ENCODE measurements at regions of chr2 and their contacts with region 1.

Region 1: DNA sequence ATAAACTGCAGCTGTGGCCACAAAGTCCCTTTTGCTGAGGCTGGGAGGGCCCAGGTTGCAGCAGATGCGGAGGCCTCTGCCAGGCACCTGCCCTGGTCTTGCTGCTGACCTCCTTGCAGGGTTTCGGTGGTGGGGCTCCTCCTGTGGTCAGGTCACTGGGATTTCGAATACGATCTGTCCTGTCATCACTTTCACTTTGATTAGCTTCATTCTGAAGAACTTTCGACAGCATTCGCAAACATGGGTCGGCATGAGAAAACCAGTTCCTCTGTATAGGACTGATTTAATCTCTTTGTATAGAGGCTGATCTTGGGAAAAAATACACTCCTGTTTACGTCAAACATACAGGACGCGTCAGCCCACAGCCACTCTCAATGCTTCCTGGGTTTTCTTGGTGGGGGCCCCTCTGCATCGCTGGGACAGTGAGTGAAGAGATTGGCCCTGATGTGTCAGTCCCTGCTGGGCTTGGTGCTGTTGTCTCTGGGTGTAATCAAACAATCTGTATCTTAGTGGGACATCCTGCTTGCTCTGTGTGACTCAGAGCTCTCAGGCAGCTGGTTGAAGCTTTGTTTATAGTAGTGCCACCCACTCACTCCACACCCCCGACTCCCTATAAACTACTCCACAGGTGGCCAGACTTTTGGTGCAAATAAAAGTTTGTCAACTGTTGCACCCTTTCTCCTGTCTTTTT is 209.4 kb upstream of the CXCR4 start:
- DNase-seq: peak; percentile 89
- H3K4me3 Mint-ChIP-seq: peak overlapping the region; percentile 52
- H3K27ac Mint-ChIP-seq: peak overlapping the region; percentile 82
- H3K4me1 Mint-ChIP-seq: peaks cover 62% of the 10 kb centered on the region
- H3K27me3 Mint-ChIP-seq: no peaks in the 10 kb centered on the region

Region 2: DNA sequence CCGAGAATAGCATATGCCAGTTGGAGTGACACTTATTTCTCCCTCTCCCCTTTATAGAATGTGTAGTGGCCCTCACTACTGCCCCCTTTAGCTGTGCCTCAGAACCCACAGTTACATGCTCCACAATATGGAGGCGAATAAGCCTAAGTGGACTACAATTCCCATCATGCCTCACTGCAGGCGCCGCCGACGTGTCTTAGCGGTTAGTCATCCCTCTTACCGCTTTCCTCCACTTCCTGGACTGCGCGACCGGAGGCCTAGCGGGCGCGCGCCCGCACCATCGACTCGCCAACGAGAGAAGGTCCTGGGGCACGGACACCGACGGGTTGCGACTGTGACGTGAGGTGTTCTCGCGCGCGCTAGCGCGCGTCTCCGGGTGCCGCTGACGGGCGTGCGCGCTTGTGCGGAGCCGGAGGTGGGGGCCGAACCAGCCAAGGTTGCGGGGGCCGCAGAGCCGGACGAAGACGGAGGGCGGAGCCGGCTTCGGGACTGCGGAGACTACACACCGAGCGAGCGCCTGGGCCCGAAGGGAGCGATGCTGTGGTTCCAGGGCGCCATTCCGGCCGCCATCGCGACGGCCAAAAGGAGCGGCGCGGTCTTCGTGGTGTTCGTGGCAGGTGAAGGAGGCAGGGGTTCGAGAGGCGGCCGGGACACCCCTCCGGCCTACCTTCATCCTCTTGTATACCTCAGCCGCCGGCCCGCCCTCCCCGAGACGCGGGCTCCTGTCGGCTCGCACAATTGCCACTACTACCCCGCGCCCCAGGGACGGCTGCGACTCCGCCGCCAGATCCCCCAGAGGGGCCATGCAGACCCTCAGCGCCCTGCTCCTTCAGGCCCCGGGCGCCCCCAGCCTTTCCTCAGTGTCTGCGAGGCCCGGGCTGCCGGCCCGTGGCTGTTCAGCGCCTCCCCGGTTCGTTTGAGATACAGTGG is 585.6 kb before region 1 on chr2 and contains the start of gene UBXN4:
- CTCF ChIA-PET with region 1: no interaction called
- intact Hi-C with region 1: loop called (anchors 5 kb)
- DNase-seq: peak; percentile 98
- H3K4me3 Mint-ChIP-seq: peak within 1 kb of the TSS; percentile 98
- H3K27ac Mint-ChIP-seq: peak within 1 kb of the TSS; percentile 99
- H3K4me1 Mint-ChIP-seq: peaks cover 30% of the 10 kb centered on the region
- H3K27me3 Mint-ChIP-seq: no peaks in the 10 kb centered on the region
- total RNA-seq, gene UBXN4: 100 to 105 TPM

Region 3: DNA sequence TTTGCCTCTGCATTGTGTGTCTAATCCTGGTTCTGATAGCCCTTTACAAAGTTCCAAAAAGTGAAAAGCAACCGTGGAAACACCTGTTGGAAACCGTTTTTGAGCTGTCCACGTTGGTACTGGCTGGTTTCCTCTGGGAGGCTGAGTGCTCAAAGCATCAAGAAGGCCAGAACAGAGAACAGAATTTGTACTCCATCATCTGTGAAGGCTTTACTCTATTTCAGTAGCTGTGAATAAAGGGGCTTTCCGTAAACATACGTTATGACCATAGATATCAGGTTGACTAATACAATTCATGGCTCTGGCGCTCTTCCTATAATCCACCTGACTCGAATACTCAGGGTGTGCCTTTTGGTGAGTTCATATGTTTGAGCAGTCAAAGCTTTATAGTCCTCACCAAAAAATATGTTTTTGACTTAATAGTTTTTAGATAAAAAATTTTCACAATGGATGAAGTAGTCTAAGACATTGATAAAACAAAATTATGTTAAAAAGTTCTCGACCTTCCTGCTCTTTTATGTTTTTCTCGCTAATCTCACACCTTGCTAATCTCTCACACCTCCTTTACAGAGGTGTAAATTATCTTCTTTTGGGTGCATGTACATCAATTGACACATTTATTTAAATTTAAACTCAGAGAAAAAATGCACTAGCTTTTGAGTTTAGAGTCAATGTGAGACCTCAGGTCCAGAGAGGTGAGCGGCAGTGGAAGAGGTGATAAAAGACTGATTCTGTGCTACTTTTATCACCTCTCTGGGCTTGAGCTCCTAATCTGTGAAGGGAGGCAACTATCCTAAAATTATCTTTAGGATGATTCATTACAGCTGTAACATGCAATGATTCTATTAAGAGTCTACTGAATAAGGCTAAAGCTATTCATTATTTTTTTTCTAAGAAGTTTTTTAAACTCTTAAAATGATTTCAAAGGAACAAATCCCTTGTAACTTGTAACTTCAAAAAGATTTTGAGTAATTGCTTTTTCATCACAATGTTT is 274.6 kb before region 1 on chr2:
- CTCF ChIA-PET with region 1: interaction called, 3 read pairs
- intact Hi-C with region 1: loop called (anchors 1 kb)
- DNase-seq: peak; percentile 53
- H3K4me3 Mint-ChIP-seq: peak overlapping the region; percentile 53
- H3K27ac Mint-ChIP-seq: peak overlapping the region; percentile 96
- H3K4me1 Mint-ChIP-seq: peaks cover 88% of the 10 kb centered on the region
- H3K27me3 Mint-ChIP-seq: no peaks in the 10 kb centered on the region

Region 4: DNA sequence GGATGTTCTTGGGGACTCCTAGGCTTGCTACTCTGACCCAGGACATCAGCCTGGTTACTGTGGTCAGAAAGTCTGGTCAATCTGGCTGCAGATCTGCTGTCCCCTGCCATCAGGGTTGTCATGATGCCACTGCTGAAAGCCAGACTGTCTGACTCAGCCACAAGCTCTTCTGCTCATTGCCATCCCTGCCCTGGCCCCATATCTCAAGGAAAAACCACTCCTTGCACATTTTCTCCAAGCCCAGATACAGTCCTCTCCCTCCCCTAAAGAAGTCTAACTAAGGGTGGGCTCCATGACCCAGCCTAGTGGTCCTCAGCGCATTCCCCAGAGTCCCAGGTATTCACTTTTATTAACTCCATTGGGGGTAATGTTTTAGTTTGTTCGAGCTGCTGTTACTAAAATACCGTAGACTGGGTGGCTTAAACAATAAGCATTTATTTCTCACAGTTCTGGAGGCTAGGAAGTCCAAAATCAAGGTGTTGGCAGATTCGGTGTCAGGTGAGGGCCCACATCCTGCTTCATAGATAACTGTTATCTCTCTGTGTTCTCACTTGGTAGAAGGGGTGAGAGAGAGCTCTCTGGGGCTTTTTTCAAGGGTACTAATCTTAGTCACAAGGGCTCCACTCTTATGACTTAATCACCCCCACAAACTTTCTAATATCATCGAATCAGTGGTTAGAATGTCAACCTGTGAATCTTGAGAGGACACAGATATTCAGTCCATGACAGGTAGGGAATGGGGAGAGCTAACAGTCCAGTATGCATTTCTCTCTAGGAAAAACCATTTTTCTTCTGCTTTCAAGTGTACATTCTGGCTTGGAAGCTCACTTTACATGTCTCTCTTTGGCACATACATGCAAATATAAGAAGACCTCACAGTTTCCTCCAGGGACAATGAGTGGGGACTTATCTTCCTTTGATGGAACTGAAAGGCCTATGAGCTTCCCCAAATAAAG is 114.6 kb before region 1 on chr2:
- CTCF ChIA-PET with region 1: no interaction called
- intact Hi-C with region 1: loop called (anchors 1 kb)
- DNase-seq: peak; percentile 67
- H3K4me3 Mint-ChIP-seq: no peak overlapping the region
- H3K27ac Mint-ChIP-seq: peak overlapping the region; percentile 3
- H3K4me1 Mint-ChIP-seq: peaks cover 43% of the 10 kb centered on the region
- H3K27me3 Mint-ChIP-seq: no peaks in the 10 kb centered on the region

Region 5: GRCh38 chr2:136255648-136256463 is 71.5 kb before region 1 on chr2:
- CTCF ChIA-PET with region 1: no interaction called
- intact Hi-C with region 1: loop called (anchors 2 kb)
- DNase-seq: peak; percentile 66
- H3K4me3 Mint-ChIP-seq: no peak overlapping the region
- H3K27ac Mint-ChIP-seq: no peak overlapping the region
- H3K4me1 Mint-ChIP-seq: peaks cover 30% of the 10 kb centered on the region
- H3K27me3 Mint-ChIP-seq: peaks cover 2% of the 10 kb centered on the region

Region 6: DNA sequence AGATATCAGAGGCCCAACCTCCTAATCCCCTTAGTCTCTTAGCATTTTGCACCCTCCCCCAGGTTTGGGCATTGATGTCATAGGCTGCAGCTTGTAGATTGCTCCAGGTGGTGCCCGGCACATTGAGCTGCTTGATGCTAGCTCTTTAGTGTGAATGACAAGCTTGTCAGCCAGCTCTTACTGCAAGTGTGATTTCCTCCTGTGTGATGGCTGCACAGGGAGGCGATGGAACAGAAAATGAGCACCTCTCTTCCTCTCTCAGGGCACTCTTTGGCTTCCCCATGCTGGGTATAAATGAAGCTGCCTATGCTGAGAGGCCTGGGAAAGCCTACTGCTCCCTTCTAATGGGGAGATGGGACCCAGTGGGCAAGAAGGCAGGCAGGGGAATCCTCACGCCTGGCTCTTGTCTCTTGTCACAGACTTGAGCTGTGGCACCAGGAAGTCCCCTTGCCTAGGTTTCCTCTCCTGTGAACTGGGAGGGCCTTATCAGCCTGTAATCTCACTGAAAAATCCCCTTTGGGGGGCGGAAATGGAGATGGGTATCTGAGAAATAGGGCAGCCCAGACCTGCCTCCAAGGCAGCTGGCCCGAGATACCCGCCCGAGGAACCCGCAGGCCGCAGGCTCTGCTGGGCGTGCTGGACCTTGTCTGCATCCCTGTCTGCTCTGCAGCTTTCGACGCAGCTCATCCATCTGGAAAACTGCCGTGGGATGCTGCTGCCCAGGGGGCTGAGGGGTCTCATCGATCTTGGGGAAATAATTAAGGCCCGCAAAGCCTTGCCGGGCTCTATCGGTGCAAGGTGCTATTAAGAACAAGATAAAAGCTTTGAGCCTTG is 45.8 kb before region 1 on chr2:
- CTCF ChIA-PET with region 1: no interaction called
- intact Hi-C with region 1: loop called (anchors 1 kb)
- DNase-seq: peak; percentile 73
- H3K4me3 Mint-ChIP-seq: no peak overlapping the region
- H3K27ac Mint-ChIP-seq: peak overlapping the region; percentile 74
- H3K4me1 Mint-ChIP-seq: peaks cover 43% of the 10 kb centered on the region
- H3K27me3 Mint-ChIP-seq: no peaks in the 10 kb centered on the region

Region 7: GRCh38 chr2:136310797-136311603 is 16.3 kb before region 1 on chr2:
- CTCF ChIA-PET with region 1: no interaction called
- intact Hi-C with region 1: loop called (anchors 1 kb)
- DNase-seq: peak; percentile 60
- H3K4me3 Mint-ChIP-seq: no peak overlapping the region
- H3K27ac Mint-ChIP-seq: peak overlapping the region; percentile 82
- H3K4me1 Mint-ChIP-seq: peaks cover 18% of the 10 kb centered on the region
- H3K27me3 Mint-ChIP-seq: no peaks in the 10 kb centered on the region

Region 8: GRCh38 chr2:136550181-136550580 is 222.9 kb after region 1 on chr2:
- CTCF ChIA-PET with region 1: no interaction called
- intact Hi-C with region 1: no loop called
- DNase-seq: no peak
- H3K4me3 Mint-ChIP-seq: no peak overlapping the region
- H3K27ac Mint-ChIP-seq: no peak overlapping the region
- H3K4me1 Mint-ChIP-seq: no peaks in the 10 kb centered on the region
- H3K27me3 Mint-ChIP-seq: peaks cover 10% of the 10 kb centered on the region

Region 9: DNA sequence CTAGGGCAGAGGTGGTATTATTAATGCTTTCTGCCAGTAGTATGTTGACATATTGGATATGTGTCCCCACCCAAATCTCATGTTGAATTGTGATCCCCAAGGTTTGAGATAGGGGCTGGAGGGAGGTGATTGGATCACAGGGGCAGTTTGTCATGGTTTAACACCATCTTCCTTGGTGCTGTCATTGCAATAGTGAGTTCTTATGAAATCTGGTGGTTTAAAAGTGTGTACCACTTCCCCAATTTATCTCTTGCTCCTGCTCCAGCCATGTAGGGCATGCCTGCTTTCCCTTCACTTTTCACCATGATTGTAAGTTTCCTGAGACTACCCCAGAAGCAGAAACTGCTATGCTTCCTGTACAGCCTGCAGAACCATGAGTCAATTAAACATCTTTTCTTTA is 391.0 kb after region 1 on chr2:
- CTCF ChIA-PET with region 1: no interaction called
- intact Hi-C with region 1: no loop called
- DNase-seq: no peak
- H3K4me3 Mint-ChIP-seq: no peak overlapping the region
- H3K27ac Mint-ChIP-seq: no peak overlapping the region
- H3K4me1 Mint-ChIP-seq: no peaks in the 10 kb centered on the region
- H3K27me3 Mint-ChIP-seq: no peaks in the 10 kb centered on the region

Measured in activated naive CD4-positive, alpha-beta T cell treated with anti-CD3 and anti-CD28 coated beads for 36 hours (primary cell).